HEK293T (cell line): ENCODE measurements at regions of chr17 and their contacts with region 1.

Region 1: DNA sequence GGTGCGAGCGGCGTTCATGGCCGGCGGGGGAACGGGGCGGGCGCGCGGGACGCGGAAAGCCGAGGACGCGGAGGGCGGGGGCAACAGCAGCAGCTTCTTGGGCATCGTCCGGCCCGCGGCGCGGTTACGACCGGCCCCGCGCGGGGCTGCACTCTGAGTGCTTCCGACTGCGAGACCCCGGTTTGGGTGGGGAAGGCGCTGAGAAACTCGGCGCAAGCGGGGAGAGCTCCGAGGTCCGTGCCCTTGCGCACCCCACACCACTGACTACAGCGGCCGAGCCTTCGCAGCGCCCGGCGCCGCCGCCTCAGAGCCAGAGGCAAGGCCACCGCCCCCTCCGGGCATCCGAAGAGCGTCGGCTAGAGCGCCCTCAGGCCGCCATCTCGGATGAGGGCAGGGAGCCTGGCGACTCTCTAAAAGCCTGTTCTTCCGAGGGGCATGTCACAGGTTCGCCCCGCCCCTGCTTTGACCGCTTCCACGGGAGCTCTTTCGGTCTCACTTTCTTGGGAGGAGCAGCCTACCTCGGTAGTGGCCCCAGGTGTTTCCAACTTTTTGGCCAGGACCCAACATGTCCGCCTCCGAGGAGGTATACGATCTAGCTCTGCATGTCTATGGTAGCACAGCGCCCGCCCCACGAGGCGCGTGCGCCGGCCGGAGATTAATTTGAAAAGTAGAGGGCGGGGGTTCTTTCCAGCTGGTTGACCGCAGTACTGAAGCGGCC is at the start of gene PRPSAP1:
- DNase-seq: peak; percentile 92

Region 2: GRCh38 chr17:76365256-76365903 is 11.6 kb after region 1 on chr17:
- CTCF ChIA-PET with region 1: interaction called, 5 read pairs
- POLR2A ChIA-PET with region 1: interaction called, 44 read pairs
- DNase-seq: no peak